CD4-positive, alpha-beta T cell (primary cell): ENCODE measurements at regions of chr14 and their contacts with region 1.

Region 1: DNA sequence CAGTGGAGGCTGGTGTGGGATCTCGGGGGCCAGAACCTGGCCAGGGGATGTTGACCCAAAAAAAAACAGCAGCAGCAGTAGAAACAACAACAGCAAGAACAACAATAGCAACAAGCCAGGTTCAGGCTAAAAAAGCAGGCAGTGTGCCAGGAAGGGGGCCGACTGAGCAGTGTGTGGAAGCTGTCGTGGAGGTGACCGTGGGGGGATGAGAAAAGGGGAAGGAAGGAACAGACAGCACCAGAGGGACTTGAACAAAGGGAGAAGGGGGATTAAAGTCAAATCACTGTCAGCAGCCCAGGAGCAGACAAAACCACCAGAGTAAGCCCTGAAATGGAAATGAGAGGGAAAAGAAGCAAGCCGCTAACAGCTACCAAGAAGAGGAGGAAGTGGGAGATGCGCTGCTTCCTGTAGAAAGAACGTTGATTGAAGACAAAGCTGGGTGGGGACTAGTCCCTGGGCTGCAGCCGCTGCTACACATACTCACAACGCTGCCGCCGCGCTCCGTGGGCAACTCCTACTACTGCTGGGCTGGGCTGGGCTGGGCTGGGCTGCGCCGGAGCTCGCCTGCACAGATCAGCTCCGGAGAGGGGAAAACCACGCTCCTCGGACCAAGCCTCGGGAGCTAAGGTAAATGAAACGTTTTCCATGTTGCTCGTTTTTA is at the start of gene GNG2:
- DNase-seq: peak; percentile 68 to 94 (median 78)
- ATAC-seq: peak; percentile 97
- H3K4me3 ChIP-seq: peak within 1 kb of the TSS; percentile 83
- H3K4me3 Mint-ChIP-seq: peak within 1 kb of the TSS; percentile 93
- H3K27ac ChIP-seq: peak within 1 kb of the TSS; percentile 80 to 88
- H3K27ac Mint-ChIP-seq: peak within 1 kb of the TSS; percentile 96
- H3K4me1 ChIP-seq: peaks cover 32% of the 10 kb centered on the region
- H3K4me1 Mint-ChIP-seq: peaks cover 69% of the 10 kb centered on the region
- H3K27me3 ChIP-seq: no peaks in the 10 kb centered on the region
- H3K27me3 Mint-ChIP-seq: no peaks in the 10 kb centered on the region
- CTCF ChIP-seq: no peak
- total RNA-seq, gene GNG2: 138 to 139 TPM

Region 2: DNA sequence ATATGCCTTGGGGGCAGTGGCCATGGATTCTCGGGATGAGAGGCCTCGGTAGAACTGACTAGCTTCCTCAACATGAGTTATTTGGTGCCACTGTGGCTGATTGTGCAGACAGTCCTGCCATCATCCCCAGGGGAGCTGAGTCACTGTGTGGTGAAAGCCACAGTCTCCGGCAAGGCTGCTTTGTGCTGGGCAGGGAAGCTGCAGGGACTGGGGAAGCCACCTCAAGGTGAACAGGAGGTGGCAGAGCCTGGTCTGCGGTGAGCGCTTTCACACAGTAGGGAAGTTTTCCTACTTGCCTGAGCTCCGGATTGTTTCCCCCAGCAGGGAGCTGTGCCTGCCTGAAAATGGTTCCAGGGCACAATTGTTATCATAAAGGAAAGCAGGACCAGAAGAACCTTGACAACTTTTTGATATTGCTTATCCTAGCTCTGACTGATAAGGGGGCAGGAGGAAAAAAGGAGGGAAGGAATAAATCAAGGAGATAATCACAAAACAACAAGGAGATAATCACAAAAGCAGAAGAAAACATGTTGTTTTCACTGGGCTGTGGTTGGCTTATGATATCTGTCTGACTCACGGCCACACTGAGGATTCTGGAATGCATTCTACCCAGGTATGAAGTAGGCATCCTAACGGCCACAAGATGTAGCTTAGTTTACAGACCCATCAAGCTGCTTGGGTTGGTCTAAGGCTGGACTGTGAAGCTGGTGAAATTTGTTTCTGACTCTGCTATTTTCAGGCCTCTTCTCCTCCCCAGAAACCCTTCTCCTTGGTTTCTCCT is 32.1 kb before region 1 on chr14:
- CTCF ChIA-PET with region 1: interaction called, 4 read pairs
- POLR2A ChIA-PET with region 1: interaction called, 13 read pairs
- intact Hi-C with region 1: loop called in 1 of 2 experiments (anchors 1 kb)
- DNase-seq: peak; percentile 15 to 82 (median 54)
- ATAC-seq: peak; percentile 96
- H3K4me3 ChIP-seq: no peak overlapping the region
- H3K4me3 Mint-ChIP-seq: no peak overlapping the region
- H3K27ac ChIP-seq: no peak overlapping the region
- H3K27ac Mint-ChIP-seq: no peak overlapping the region
- H3K4me1 ChIP-seq: peaks cover 21% of the 10 kb centered on the region
- H3K4me1 Mint-ChIP-seq: no peaks in the 10 kb centered on the region
- H3K27me3 ChIP-seq: no peaks in the 10 kb centered on the region
- H3K27me3 Mint-ChIP-seq: no peaks in the 10 kb centered on the region
- CTCF ChIP-seq: no peak

Region 3: DNA sequence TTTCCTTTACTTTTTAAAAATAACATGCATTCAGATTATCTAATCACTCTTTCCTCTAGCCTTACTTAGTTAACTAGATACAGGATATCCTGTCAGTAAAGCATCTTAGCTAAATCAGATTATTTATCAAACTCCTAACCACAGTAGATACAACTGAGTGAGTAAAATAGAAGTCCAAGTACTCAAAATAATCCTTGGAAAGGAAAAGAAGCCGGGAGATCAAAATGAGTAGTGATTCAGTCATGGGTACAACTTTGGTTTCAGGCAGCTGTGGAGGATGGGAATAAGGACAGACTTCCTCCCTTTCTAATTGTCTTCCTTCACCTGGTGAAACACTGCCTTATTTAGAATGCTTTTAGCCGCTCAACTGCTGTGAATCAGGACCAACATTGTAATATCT is 29.6 kb after region 1 on chr14:
- CTCF ChIA-PET with region 1: interaction called, 3 read pairs
- POLR2A ChIA-PET with region 1: interaction called, 36 read pairs
- intact Hi-C with region 1: no loop called
- DNase-seq: peak in 1 of 14 experiments; percentile 53
- ATAC-seq: peak; percentile 79
- H3K4me3 ChIP-seq: no peak overlapping the region
- H3K4me3 Mint-ChIP-seq: peak overlapping the region; percentile 70
- H3K27ac ChIP-seq: peak overlapping the region in 1 of 2 donors; percentile 39
- H3K27ac Mint-ChIP-seq: peak overlapping the region; percentile 34
- H3K4me1 ChIP-seq: peaks cover 11% of the 10 kb centered on the region
- H3K4me1 Mint-ChIP-seq: peaks cover 89% of the 10 kb centered on the region
- H3K27me3 ChIP-seq: no peaks in the 10 kb centered on the region
- H3K27me3 Mint-ChIP-seq: no peaks in the 10 kb centered on the region
- CTCF ChIP-seq: no peak

Region 4: DNA sequence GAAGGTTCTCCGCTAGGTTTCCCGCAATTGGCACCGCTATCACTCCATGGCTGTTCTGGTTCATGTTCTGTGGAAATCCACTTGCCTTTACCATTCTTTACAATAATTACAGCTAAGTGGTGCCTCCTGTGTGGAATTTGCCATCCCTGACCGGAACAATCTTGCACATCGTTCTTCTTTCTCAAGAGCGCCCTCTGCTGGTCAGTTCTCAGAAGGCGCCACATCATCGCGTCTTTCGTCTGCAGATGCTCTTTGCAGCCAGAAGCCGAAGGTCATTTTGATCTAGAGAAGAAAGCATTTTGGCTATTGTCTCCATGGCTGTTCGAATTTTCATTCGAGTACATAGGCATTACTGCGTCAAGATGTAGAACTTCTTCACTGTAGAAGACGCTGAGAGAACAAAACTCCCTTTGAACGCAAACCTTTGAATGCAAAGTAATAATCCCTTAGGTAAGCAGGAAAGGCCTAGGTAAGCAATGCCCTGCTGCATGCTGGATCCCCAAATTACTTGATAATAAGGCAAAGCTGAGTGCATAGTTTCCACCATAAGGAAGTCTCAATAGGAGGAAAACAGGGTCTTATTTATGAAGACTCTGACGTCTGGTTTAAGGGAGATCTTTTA is 118.9 kb after region 1 on chr14:
- CTCF ChIA-PET with region 1: interaction called, 5 read pairs
- POLR2A ChIA-PET with region 1: interaction called, 12 read pairs
- intact Hi-C with region 1: no loop called
- DNase-seq: peak; percentile 66 to 90 (median 80)
- ATAC-seq: peak; percentile 91
- H3K4me3 ChIP-seq: no peak overlapping the region
- H3K4me3 Mint-ChIP-seq: no peak overlapping the region
- H3K27ac ChIP-seq: no peak overlapping the region
- H3K27ac Mint-ChIP-seq: no peak overlapping the region
- H3K4me1 ChIP-seq: peaks cover 8% of the 10 kb centered on the region
- H3K4me1 Mint-ChIP-seq: peaks cover 7% of the 10 kb centered on the region
- H3K27me3 ChIP-seq: no peaks in the 10 kb centered on the region
- H3K27me3 Mint-ChIP-seq: no peaks in the 10 kb centered on the region
- CTCF ChIP-seq: peak; percentile 98